Activated CD8-positive, alpha-beta T cell treated with anti-CD3 and anti-CD28 coated beads, Interleukin-2, amount 10 ng/mL, durations not matched to agents 7 days and 5 days (primary cell): ENCODE measurements at regions of chr1 and their contacts with region 1.

Region 1: GRCh38 chr1:184805667-184806295 is 51.1 kb upstream of the EDEM3 start:
- DNase-seq: peak; percentile 88
- ATAC-seq: peak; percentile 95
- H3K4me3 Mint-ChIP-seq: no peak overlapping the region
- H3K27ac Mint-ChIP-seq: peak overlapping the region; percentile 32
- H3K4me1 Mint-ChIP-seq: peaks cover 3% of the 10 kb centered on the region
- H3K27me3 Mint-ChIP-seq: no peaks in the 10 kb centered on the region

Region 2: GRCh38 chr1:184792450-184792969 is 13.3 kb before region 1 on chr1:
- CTCF ChIA-PET with region 1: interaction called, 11 read pairs
- POLR2A ChIA-PET with region 1: no interaction called
- DNase-seq: no peak
- ATAC-seq: peak; percentile 55
- H3K4me3 Mint-ChIP-seq: no peak overlapping the region
- H3K27ac Mint-ChIP-seq: peak overlapping the region; percentile 17
- H3K4me1 Mint-ChIP-seq: peaks cover 12% of the 10 kb centered on the region
- H3K27me3 Mint-ChIP-seq: no peaks in the 10 kb centered on the region

Region 3: DNA sequence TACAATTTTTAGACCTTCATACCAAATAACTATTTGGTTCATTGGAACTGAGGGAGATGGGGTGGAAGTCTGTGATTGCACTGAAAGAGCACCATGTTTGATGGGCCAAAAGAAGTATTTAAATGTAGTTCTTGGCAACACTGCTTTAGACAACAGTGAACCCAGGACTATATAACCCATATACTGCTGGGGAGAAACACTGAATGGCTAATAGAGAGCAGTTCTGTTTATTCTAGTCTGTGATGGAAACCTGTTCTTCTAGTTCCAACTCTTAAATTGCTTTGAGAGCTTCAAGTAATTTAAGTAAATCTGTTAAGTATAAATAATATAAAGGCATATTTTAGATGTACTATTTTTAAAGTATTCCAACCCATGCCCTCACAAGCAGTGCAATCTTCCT is 72.2 kb after region 1 on chr1:
- CTCF ChIA-PET with region 1: no interaction called
- POLR2A ChIA-PET with region 1: no interaction called
- DNase-seq: no peak
- ATAC-seq: no peak
- H3K4me3 Mint-ChIP-seq: no peak overlapping the region
- H3K27ac Mint-ChIP-seq: no peak overlapping the region
- H3K4me1 Mint-ChIP-seq: peaks cover 3% of the 10 kb centered on the region
- H3K27me3 Mint-ChIP-seq: peaks cover 4% of the 10 kb centered on the region

Region 4: DNA sequence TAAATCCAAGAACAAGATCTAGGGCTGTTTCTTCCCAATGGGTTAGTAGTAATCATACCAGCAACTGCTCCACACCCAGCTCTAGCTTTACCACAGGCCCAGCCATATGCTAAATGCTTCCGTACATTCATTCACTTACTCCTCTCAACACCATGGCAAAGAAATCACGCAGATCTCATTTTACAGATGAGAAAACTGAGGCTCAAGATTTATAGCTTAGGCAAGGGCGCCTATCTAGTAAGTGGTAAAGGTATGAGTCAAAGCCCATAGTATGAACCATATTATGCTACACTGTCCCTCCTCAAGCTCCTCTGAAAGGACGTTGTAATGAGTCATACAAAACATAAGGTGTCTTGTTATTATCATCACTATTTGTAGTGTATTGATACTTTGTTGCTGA is 86.3 kb after region 1 on chr1:
- CTCF ChIA-PET with region 1: interaction called, 12 read pairs
- POLR2A ChIA-PET with region 1: no interaction called
- DNase-seq: no peak
- ATAC-seq: peak; percentile 51
- H3K4me3 Mint-ChIP-seq: no peak overlapping the region
- H3K27ac Mint-ChIP-seq: no peak overlapping the region
- H3K4me1 Mint-ChIP-seq: peaks cover 30% of the 10 kb centered on the region
- H3K27me3 Mint-ChIP-seq: no peaks in the 10 kb centered on the region

Region 5: GRCh38 chr1:184973272-184974055 is 167.7 kb after region 1 on chr1:
- CTCF ChIA-PET with region 1: interaction called, 170 read pairs
- POLR2A ChIA-PET with region 1: no interaction called
- DNase-seq: peak; percentile 26
- ATAC-seq: peak; percentile 8
- H3K4me3 Mint-ChIP-seq: peak overlapping the region; percentile 88
- H3K27ac Mint-ChIP-seq: peak overlapping the region; percentile 89
- H3K4me1 Mint-ChIP-seq: peaks cover 47% of the 10 kb centered on the region
- H3K27me3 Mint-ChIP-seq: peaks cover 19% of the 10 kb centered on the region

Region 6: GRCh38 chr1:184982002-184982954 is 176.5 kb after region 1 on chr1:
- CTCF ChIA-PET with region 1: interaction called, 170 read pairs
- POLR2A ChIA-PET with region 1: no interaction called
- DNase-seq: peak; percentile 83
- ATAC-seq: peak; percentile 99
- H3K4me3 Mint-ChIP-seq: no peak overlapping the region
- H3K27ac Mint-ChIP-seq: no peak overlapping the region
- H3K4me1 Mint-ChIP-seq: peaks cover 7% of the 10 kb centered on the region
- H3K27me3 Mint-ChIP-seq: peaks cover 28% of the 10 kb centered on the region

Region 7: GRCh38 chr1:185035258-185035657 is 229.5 kb after region 1 on chr1:
- CTCF ChIA-PET with region 1: no interaction called
- POLR2A ChIA-PET with region 1: no interaction called
- DNase-seq: no peak
- ATAC-seq: no peak
- H3K4me3 Mint-ChIP-seq: no peak overlapping the region
- H3K27ac Mint-ChIP-seq: no peak overlapping the region
- H3K4me1 Mint-ChIP-seq: no peaks in the 10 kb centered on the region
- H3K27me3 Mint-ChIP-seq: peaks cover 14% of the 10 kb centered on the region